ENCODE measurements at regions of chr17 and their contacts with region 1.

Region 1: DNA sequence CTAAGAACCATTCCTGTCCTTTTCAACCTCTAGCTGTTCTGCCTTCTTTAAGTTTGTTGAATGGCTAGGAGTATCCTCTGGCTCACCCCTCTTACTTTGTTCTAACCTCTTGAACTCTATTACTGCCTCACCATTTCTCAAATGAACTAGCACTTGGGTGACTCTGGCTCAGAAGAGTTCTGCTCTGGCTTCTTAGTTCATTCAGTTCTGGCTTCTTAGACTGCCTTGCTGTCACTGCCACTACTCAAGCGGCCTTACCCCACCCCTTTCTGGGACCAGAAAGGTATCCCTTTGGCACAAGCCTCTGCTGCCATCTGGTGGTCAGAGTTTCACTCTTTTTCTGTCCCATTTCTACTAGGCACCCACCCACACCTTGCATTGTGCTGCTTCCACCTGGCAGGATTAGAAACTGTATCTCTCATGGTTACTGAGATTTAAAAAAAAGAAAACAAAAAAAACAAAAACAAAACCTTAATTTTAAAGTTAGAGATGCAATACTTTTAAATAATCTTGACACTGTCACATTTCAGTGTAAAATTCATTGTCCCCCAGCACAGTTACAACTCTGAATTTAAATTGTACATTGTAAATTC is 6.8 kb upstream of the ABCA10 start:
- DNase-seq: peak; percentile 97

Region 2: GRCh38 chr17:68771867-68772515 is 463.4 kb before region 1 on chr17:
- in situ Hi-C with region 1: loop called (anchors 10 kb)
- DNase-seq: peak; percentile 87

Region 3: DNA sequence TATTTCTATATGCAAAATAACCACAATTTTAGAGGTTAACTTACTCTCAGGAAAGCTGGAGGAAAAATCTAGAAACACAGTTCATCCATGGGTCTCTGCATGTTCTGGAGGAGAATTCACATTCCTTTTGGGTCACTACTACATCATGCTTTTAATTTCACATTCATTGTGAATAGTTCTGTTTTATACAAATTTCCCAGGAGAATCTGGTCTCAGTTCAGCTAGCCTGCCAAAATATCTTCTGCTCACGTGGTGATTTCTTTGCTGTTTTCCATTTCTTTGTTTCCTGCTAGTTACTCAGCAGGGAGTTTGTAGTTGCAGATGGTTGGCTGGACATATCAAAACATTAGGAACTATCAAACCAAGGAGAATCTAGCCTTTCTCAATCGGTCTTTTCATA is 174.6 kb before region 1 on chr17 and contains the start of gene ABCA9:
- in situ Hi-C with region 1: loop called (anchors 25 kb)
- DNase-seq: no peak

Region 4: DNA sequence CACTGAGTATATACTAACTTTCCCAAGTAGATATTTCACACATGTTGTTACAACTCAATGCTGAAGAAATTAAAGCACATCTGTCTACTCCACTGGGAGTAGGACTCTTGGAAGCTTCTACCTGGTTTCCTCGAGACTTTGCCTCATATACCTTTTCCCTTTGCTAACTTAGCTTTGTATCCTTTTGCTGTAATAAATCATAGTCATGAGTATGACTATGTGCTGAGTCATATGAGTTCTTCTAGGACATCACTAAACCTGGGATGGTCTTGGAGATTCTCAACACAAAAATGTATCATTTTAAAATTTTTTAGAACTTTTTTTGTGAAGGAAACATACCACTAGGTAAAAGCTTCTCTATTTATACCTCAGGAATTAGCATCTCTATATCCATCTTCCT is 51.7 kb after region 1 on chr17:
- in situ Hi-C with region 1: no loop called
- DNase-seq: no peak